ENCODE measurements at regions of chr7 and their contacts with region 1.

Region 1: GRCh38 chr7:135977007-135977741 is at the start of gene MTPN:
- DNase-seq: peak; percentile 93 to 98 (median 97)
- ATAC-seq: peak; percentile 81
- H3K4me3 ChIP-seq: peak within 1 kb of the TSS; percentile 90
- H3K4me3 Mint-ChIP-seq: peak within 1 kb of the TSS; percentile 92
- H3K27ac ChIP-seq: peak within 1 kb of the TSS; percentile 90 to 91
- H3K27ac Mint-ChIP-seq: peak within 1 kb of the TSS; percentile 92
- H3K4me1 ChIP-seq: peaks cover 59% of the 10 kb centered on the region
- H3K4me1 Mint-ChIP-seq: peaks cover 86% of the 10 kb centered on the region
- H3K27me3 ChIP-seq: no peaks in the 10 kb centered on the region
- H3K27me3 Mint-ChIP-seq: no peaks in the 10 kb centered on the region
- CTCF ChIP-seq: no peak
- total RNA-seq, gene MTPN: 88.4 to 94.0 TPM

Region 2: GRCh38 chr7:134126966-134127848 is 1850.0 kb before region 1 on chr7 and contains the start of gene LRGUK:
- CTCF ChIA-PET with region 1: no interaction called
- POLR2A ChIA-PET with region 1: no interaction called
- intact Hi-C with region 1: loop called in 1 of 2 experiments (anchors 5 kb)
- DNase-seq: peak; percentile 55 to 90 (median 72)
- ATAC-seq: peak; percentile 100
- H3K4me3 ChIP-seq: peak within 1 kb of the TSS; percentile 72
- H3K4me3 Mint-ChIP-seq: peak within 1 kb of the TSS; percentile 91
- H3K27ac ChIP-seq: no peak within 1 kb of the TSS
- H3K27ac Mint-ChIP-seq: no peak within 1 kb of the TSS
- H3K4me1 ChIP-seq: peaks cover 12% of the 10 kb centered on the region
- H3K4me1 Mint-ChIP-seq: peaks cover 21% of the 10 kb centered on the region
- H3K27me3 ChIP-seq: no peaks in the 10 kb centered on the region
- H3K27me3 Mint-ChIP-seq: peaks cover 35% of the 10 kb centered on the region
- CTCF ChIP-seq: no peak
- total RNA-seq, gene LRGUK: 0.20 to 0.27 TPM

Region 3: GRCh38 chr7:134316539-134317344 is 1660.4 kb before region 1 on chr7 and contains the start of gene SLC35B4:
- CTCF ChIA-PET with region 1: no interaction called
- POLR2A ChIA-PET with region 1: no interaction called
- intact Hi-C with region 1: loop called in 1 of 2 experiments (anchors 10 kb)
- DNase-seq: peak; percentile 90 to 97 (median 92)
- ATAC-seq: peak; percentile 96
- H3K4me3 ChIP-seq: peak within 1 kb of the TSS; percentile 98
- H3K4me3 Mint-ChIP-seq: peak within 1 kb of the TSS; percentile 93
- H3K27ac ChIP-seq: peak within 1 kb of the TSS; percentile 36 to 65
- H3K27ac Mint-ChIP-seq: peak within 1 kb of the TSS; percentile 77
- H3K4me1 ChIP-seq: peaks cover 15% of the 10 kb centered on the region
- H3K4me1 Mint-ChIP-seq: peaks cover 26% of the 10 kb centered on the region
- H3K27me3 ChIP-seq: no peaks in the 10 kb centered on the region
- H3K27me3 Mint-ChIP-seq: no peaks in the 10 kb centered on the region
- CTCF ChIP-seq: peak; percentile 27
- total RNA-seq, gene SLC35B4: 5.8 to 7.8 TPM

Region 4: DNA sequence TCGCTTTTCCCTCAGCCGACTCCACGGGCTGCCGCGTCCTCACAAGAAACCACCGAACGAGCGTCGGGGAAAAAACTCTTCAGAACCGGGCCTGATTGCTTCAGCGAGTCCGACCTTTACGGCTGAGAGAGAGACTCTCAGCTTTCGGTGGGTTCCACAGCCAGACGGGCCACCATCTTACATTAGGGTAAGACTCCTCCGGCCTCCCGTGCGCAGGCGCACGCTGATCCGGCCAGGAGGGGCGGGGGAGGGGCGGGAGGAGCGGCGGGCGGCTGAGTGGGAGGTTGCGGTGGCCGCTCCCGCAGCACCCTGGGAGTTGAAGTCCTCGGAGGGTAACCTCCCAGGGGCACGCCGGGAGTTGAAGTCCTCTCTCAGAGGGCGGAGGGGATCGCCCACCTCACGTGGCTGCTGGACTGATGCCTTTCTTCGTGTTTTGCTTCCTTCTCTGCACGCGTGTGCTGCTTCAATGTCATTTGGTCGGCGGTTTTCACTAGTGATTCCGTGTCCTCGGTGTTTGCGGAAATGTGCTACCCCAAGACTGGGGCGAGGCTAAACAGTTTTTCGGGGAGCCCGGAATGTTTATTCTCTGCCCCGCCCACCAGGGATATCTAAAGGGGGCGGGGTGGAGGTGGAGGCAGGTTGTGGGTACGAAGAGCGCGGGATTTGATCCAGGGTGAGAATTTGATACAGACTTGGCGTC is 467.1 kb before region 1 on chr7 and contains the start of gene CNOT4:
- CTCF ChIA-PET with region 1: no interaction called
- POLR2A ChIA-PET with region 1: no interaction called
- intact Hi-C with region 1: loop called (anchors 2 to 5 kb)
- DNase-seq: peak; percentile 94 to 98 (median 97)
- ATAC-seq: peak; percentile 94
- H3K4me3 ChIP-seq: peak within 1 kb of the TSS; percentile 91
- H3K4me3 Mint-ChIP-seq: no peak within 1 kb of the TSS
- H3K27ac ChIP-seq: peak within 1 kb of the TSS; percentile 90 to 96
- H3K27ac Mint-ChIP-seq: no peak within 1 kb of the TSS
- H3K4me1 ChIP-seq: peaks cover 16% of the 10 kb centered on the region
- H3K4me1 Mint-ChIP-seq: peaks cover 14% of the 10 kb centered on the region
- H3K27me3 ChIP-seq: no peaks in the 10 kb centered on the region
- H3K27me3 Mint-ChIP-seq: no peaks in the 10 kb centered on the region
- CTCF ChIP-seq: no peak
- total RNA-seq, gene CNOT4: 24.0 to 29.8 TPM

Region 5: GRCh38 chr7:135558337-135558767 is 418.8 kb before region 1 on chr7:
- CTCF ChIA-PET with region 1: no interaction called
- POLR2A ChIA-PET with region 1: no interaction called
- intact Hi-C with region 1: loop called in 1 of 2 experiments (anchors 2 kb)
- DNase-seq: peak; percentile 29 to 85 (median 52)
- ATAC-seq: peak; percentile 57
- H3K4me3 ChIP-seq: peak overlapping the region; percentile 99
- H3K4me3 Mint-ChIP-seq: no peak overlapping the region
- H3K27ac ChIP-seq: peak overlapping the region; percentile 93 to 99
- H3K27ac Mint-ChIP-seq: no peak overlapping the region
- H3K4me1 ChIP-seq: peaks cover 13% of the 10 kb centered on the region
- H3K4me1 Mint-ChIP-seq: peaks cover 20% of the 10 kb centered on the region
- H3K27me3 ChIP-seq: no peaks in the 10 kb centered on the region
- H3K27me3 Mint-ChIP-seq: no peaks in the 10 kb centered on the region
- CTCF ChIP-seq: peak; percentile 57

Region 6: GRCh38 chr7:135942614-135943013 is 34.6 kb before region 1 on chr7:
- CTCF ChIA-PET with region 1: no interaction called
- POLR2A ChIA-PET with region 1: no interaction called
- intact Hi-C with region 1: loop called in 1 of 2 experiments (anchors 5 kb)
- DNase-seq: no peak
- ATAC-seq: no peak
- H3K4me3 ChIP-seq: no peak overlapping the region
- H3K4me3 Mint-ChIP-seq: no peak overlapping the region
- H3K27ac ChIP-seq: no peak overlapping the region
- H3K27ac Mint-ChIP-seq: no peak overlapping the region
- H3K4me1 ChIP-seq: peaks cover 3% of the 10 kb centered on the region
- H3K4me1 Mint-ChIP-seq: peaks cover 72% of the 10 kb centered on the region
- H3K27me3 ChIP-seq: no peaks in the 10 kb centered on the region
- H3K27me3 Mint-ChIP-seq: no peaks in the 10 kb centered on the region
- CTCF ChIP-seq: no peak

Region 7: DNA sequence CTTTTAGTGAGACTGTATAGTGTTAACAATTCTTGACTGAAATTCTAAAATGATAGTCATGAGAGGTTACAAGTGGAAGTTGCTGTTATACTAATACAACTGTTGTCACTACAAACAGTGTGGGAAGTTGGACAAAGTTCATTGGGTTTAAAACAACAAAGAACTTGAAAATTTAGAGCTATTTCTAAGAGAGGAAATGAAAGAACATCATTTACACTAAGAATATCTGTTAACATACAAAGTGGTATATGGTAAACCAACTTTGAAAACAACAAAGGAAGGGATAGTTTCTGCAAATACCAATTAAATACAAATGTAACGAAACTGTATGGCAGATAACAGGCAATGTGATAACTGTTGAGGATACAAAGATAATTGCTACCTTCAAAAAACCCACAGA is 11.6 kb before region 1 on chr7:
- CTCF ChIA-PET with region 1: interaction called, 3 read pairs
- POLR2A ChIA-PET with region 1: interaction called, 5 read pairs
- intact Hi-C with region 1: loop called in 1 of 2 experiments (anchors 2 kb)
- DNase-seq: no peak
- ATAC-seq: no peak
- H3K4me3 ChIP-seq: no peak overlapping the region
- H3K4me3 Mint-ChIP-seq: no peak overlapping the region
- H3K27ac ChIP-seq: no peak overlapping the region
- H3K27ac Mint-ChIP-seq: no peak overlapping the region
- H3K4me1 ChIP-seq: peaks cover 10% of the 10 kb centered on the region
- H3K4me1 Mint-ChIP-seq: peaks cover 92% of the 10 kb centered on the region
- H3K27me3 ChIP-seq: no peaks in the 10 kb centered on the region
- H3K27me3 Mint-ChIP-seq: no peaks in the 10 kb centered on the region
- CTCF ChIP-seq: no peak

Measured in CD4-positive, alpha-beta T cell (primary cell).